ENCODE measurements at regions of chr3 and their contacts with region 1.

Region 1: GRCh38 chr3:56988458-56989168 is 71.9 kb upstream of the SPATA12 start:
- DNase-seq: peak; percentile 43
- ATAC-seq: peak; percentile 90
- H3K4me3 ChIP-seq: no peak overlapping the region
- H3K27ac ChIP-seq: no peak overlapping the region
- H3K4me1 ChIP-seq: no peaks in the 10 kb centered on the region
- H3K27me3 ChIP-seq: no peaks in the 10 kb centered on the region
- CTCF ChIP-seq: peak; percentile 53 to 90 (median 84)
- POLR2A ChIP-seq: no peak
- RAD21 ChIP-seq: peak; percentile 94

Region 2: GRCh38 chr3:56342475-56342874 is 646.1 kb before region 1 on chr3:
- CTCF ChIA-PET with region 1: interaction called, 4 read pairs
- POLR2A ChIA-PET with region 1: no interaction called
- RAD21 ChIA-PET with region 1: no interaction called
- intact Hi-C with region 1: loop called (anchors 5 kb)
- DNase-seq: no peak
- ATAC-seq: no peak
- H3K4me3 ChIP-seq: no peak overlapping the region
- H3K27ac ChIP-seq: no peak overlapping the region
- H3K4me1 ChIP-seq: no peaks in the 10 kb centered on the region
- H3K27me3 ChIP-seq: peaks cover 25% of the 10 kb centered on the region
- CTCF ChIP-seq: no peak
- POLR2A ChIP-seq: no peak
- RAD21 ChIP-seq: no peak

Region 3: DNA sequence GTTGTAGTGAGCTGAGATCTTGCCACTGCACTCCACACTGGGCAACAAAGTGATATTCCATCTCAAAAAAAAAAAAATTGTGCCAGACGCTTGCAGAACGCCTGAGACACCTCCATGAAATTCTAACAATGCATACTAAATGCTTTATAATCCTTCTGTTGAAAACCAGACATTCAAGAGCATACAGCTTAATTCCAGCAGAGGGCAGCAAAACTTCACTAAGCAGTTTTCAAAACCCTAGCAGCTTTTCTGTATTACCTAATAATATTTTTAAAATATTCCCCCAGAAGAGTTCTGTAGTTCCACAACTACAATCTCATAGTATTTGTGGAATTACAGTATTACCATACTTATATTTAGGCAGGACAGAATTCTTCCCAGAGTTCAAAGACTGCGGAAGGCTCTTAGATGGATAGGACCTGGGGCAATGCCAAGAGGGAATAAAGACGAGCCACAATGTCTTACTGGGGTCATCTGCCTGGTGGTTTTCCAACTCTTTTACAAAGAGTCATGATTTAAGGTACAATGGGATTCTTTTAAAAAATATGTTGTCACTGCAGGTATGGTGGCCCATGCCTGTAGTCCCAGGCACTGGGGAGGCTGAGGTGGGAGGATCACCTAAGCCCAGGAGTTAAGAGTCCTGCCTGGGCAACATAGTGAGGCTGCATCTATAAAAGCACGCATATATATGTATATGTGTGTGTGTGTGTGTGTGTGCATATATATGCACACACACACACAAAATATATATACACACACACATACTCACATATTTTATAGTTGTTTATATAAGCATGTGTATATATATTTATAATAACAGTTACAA is 285.9 kb before region 1 on chr3:
- CTCF ChIA-PET with region 1: interaction called, 63 read pairs
- POLR2A ChIA-PET with region 1: no interaction called
- RAD21 ChIA-PET with region 1: interaction called, 6 to 21 read pairs
- intact Hi-C with region 1: loop called (anchors 1 kb)
- DNase-seq: peak; percentile 61
- ATAC-seq: peak; percentile 86
- H3K4me3 ChIP-seq: no peak overlapping the region
- H3K27ac ChIP-seq: no peak overlapping the region
- H3K4me1 ChIP-seq: peaks cover 0 to 6% of the 10 kb centered on the region in 2 experiments; a peak in 1 of 4 replicates
- H3K27me3 ChIP-seq: no peaks in the 10 kb centered on the region
- CTCF ChIP-seq: peak; percentile 74 to 92 (median 83)
- POLR2A ChIP-seq: no peak
- RAD21 ChIP-seq: peak; percentile 96

Region 4: DNA sequence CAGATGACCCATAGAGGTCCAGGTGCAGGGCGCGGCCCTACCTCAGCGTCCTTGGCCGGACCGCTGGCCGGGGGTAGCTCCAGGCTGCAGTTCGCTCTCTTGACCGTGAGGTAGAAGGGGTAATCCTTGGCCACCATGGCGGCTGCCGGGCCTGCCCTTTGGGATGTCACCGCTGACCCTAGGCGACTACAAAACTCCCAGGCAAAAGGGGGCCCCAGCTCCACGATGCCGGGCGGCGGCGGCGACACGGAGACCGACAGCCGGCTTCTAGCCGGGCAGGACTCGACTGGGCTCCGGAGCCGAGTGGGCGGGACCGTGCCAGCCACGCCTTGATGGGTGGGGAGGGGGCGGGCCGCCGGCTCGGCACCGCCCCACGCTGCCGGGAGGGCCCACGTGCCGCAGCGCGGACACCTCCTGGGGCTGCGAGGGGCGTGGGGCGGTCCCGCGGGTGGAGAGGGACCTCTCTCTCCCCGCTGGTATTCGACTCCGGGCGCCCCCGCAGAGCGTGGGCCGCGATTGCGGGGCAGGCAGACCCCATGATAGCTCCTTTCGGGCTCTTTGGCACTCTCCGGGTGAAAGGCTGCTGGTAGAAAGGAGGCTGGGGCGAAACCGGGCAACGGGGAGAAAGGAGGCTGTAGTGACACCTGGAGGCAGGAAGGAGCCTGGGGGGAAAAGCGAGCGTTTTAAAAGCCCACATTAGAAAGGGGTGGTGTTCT is 186.8 kb before region 1 on chr3 and contains the start of gene ARHGEF3:
- CTCF ChIA-PET with region 1: interaction called, 9 read pairs
- POLR2A ChIA-PET with region 1: no interaction called
- RAD21 ChIA-PET with region 1: interaction called, 5 read pairs
- intact Hi-C with region 1: loop called (anchors 1 kb)
- DNase-seq: peak; percentile 72
- ATAC-seq: peak; percentile 93
- H3K4me3 ChIP-seq: peak within 1 kb of the TSS; percentile 41 to 64
- H3K27ac ChIP-seq: peak within 1 kb of the TSS; percentile 45; the same call in 1 of the 2 replicates
- H3K4me1 ChIP-seq: peaks cover 16 to 27% of the 10 kb centered on the region in 2 experiments
- H3K27me3 ChIP-seq: no peaks in the 10 kb centered on the region
- CTCF ChIP-seq: peak; percentile 46 to 77 (median 64)
- POLR2A ChIP-seq: peak; percentile 57
- RAD21 ChIP-seq: peak; percentile 59
- total RNA-seq, gene ARHGEF3: 18.1 TPM

Region 5: DNA sequence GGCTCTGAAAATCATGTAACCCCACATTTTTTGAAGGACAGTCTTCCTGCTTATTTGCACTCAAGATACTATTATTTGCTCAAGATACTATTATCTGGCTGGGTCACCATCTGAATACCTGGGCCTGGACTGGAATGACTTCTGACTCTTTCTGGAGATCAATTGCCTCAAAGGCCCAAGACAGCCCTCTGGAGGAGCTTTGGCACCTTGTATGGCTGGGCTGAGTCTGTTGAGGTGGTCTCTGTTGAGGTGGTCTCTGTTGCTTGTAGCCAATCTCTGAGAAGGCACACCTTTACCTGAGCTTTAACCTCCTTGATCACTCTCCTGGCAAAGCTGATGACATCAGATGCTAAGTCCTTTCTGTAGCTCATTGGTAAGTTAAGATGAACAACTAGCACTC is 104.9 kb after region 1 on chr3:
- CTCF ChIA-PET with region 1: interaction called, 6 read pairs
- POLR2A ChIA-PET with region 1: no interaction called
- RAD21 ChIA-PET with region 1: interaction called in 1 of 2 experiments, 10 read pairs
- intact Hi-C with region 1: no loop called
- DNase-seq: no peak
- ATAC-seq: no peak; the same call in 1 of the 2 replicates
- H3K4me3 ChIP-seq: no peak overlapping the region
- H3K27ac ChIP-seq: no peak overlapping the region
- H3K4me1 ChIP-seq: peaks cover 0 to 4% of the 10 kb centered on the region in 2 experiments; a peak in 1 of 4 replicates
- H3K27me3 ChIP-seq: no peaks in the 10 kb centered on the region
- CTCF ChIP-seq: peak in 2 of 3 experiments; percentile 15 to 52; a peak in 1 of 6 replicates
- POLR2A ChIP-seq: no peak
- RAD21 ChIP-seq: peak; percentile 70

Measured in HCT116 (cell line).